ENCODE measurements at regions of chr6 and their contacts with region 1.

Region 1: GRCh38 chr6:25070547-25071366 is 135.0 kb upstream of the RIPOR2 start:
- DNase-seq: peak; percentile 70 to 87 (median 79)
- H3K4me3 ChIP-seq: no peak overlapping the region
- H3K4me3 Mint-ChIP-seq: peak overlapping the region in 6 of 7 donors; percentile 50 to 86 (median 74)
- H3K27ac ChIP-seq: no peak overlapping the region
- H3K27ac Mint-ChIP-seq: peak overlapping the region in 7 of 8 donors; percentile 52 to 89 (median 81)
- H3K4me1 ChIP-seq: no peaks in the 10 kb centered on the region
- H3K4me1 Mint-ChIP-seq: peaks cover 5 to 9% (median 5%) of the 10 kb centered on the region in 3 donors
- H3K27me3 ChIP-seq: no peaks in the 10 kb centered on the region
- H3K27me3 Mint-ChIP-seq: no peaks in the 10 kb centered on the region

Region 2: GRCh38 chr6:24796616-24797290 is 274.0 kb before region 1 on chr6:
- CTCF ChIA-PET with region 1: no interaction called
- POLR2A ChIA-PET with region 1: no interaction called
- DNase-seq: no peak
- H3K4me3 ChIP-seq: no peak overlapping the region
- H3K4me3 Mint-ChIP-seq: no peak overlapping the region
- H3K27ac ChIP-seq: no peak overlapping the region
- H3K27ac Mint-ChIP-seq: peak overlapping the region in 3 of 8 donors; percentile 29 to 87 (median 63)
- H3K4me1 ChIP-seq: no peaks in the 10 kb centered on the region
- H3K4me1 Mint-ChIP-seq: peaks cover 4 to 9% (median 5%) of the 10 kb centered on the region in 3 donors
- H3K27me3 ChIP-seq: no peaks in the 10 kb centered on the region
- H3K27me3 Mint-ChIP-seq: no peaks in the 10 kb centered on the region

Region 3: GRCh38 chr6:25035527-25036435 is 35.0 kb before region 1 on chr6:
- CTCF ChIA-PET with region 1: interaction called, 19 read pairs
- POLR2A ChIA-PET with region 1: interaction called, 3 read pairs
- DNase-seq: no peak
- H3K4me3 ChIP-seq: peak overlapping the region; percentile 65
- H3K4me3 Mint-ChIP-seq: peak overlapping the region; percentile 82 to 89 (median 87)
- H3K27ac ChIP-seq: peak overlapping the region; percentile 55
- H3K27ac Mint-ChIP-seq: peak overlapping the region; percentile 94 to 99 (median 97)
- H3K4me1 ChIP-seq: peaks cover 62% of the 10 kb centered on the region
- H3K4me1 Mint-ChIP-seq: peaks cover 75 to 95% (median 86%) of the 10 kb centered on the region in 3 donors
- H3K27me3 ChIP-seq: no peaks in the 10 kb centered on the region
- H3K27me3 Mint-ChIP-seq: no peaks in the 10 kb centered on the region

Region 4: GRCh38 chr6:25042036-25042521 is 28.7 kb before region 1 on chr6:
- CTCF ChIA-PET with region 1: interaction called, 21 read pairs
- POLR2A ChIA-PET with region 1: interaction called, 3 read pairs
- DNase-seq: peak; percentile 38 to 68 (median 52)
- H3K4me3 ChIP-seq: peak overlapping the region; percentile 85
- H3K4me3 Mint-ChIP-seq: peak overlapping the region; percentile 94 to 99 (median 96)
- H3K27ac ChIP-seq: peak overlapping the region; percentile 67
- H3K27ac Mint-ChIP-seq: peak overlapping the region; percentile 93 to 100 (median 98)
- H3K4me1 ChIP-seq: peaks cover 55% of the 10 kb centered on the region
- H3K4me1 Mint-ChIP-seq: peaks cover 57 to 66% (median 64%) of the 10 kb centered on the region in 3 donors
- H3K27me3 ChIP-seq: no peaks in the 10 kb centered on the region
- H3K27me3 Mint-ChIP-seq: no peaks in the 10 kb centered on the region